Ovary (tissue), 10 donors: ENCODE measurements at regions of chr12 and their contacts with region 1.

Region 1: GRCh38 chr12:107760809-107761501 is at the start of gene PRDM4:
- DNase-seq: peak; percentile 92 to 95 (median 94)
- H3K4me3 ChIP-seq: peak within 1 kb of the TSS; percentile 79
- H3K27ac ChIP-seq: no peak within 1 kb of the TSS
- H3K4me1 ChIP-seq: peaks cover 5% of the 10 kb centered on the region
- H3K27me3 ChIP-seq: no peaks in the 10 kb centered on the region
- CTCF ChIP-seq: peak in 1 of 3 donors; percentile 38
- EP300 ChIP-seq: no peak
- POLR2A ChIP-seq: peak; percentile 67
- total RNA-seq, gene PRDM4: 14.4 to 30.3 (median 26.4) TPM

Region 2: GRCh38 chr12:107685360-107686248 is 75.4 kb before region 1 on chr12 and contains the start of gene PWP1:
- intact Hi-C with region 1: loop called in 1 of 4 experiments (anchors 10 kb)
- DNase-seq: peak; percentile 92 to 96 (median 95)
- H3K4me3 ChIP-seq: peak within 1 kb of the TSS; percentile 93
- H3K27ac ChIP-seq: peak within 1 kb of the TSS; percentile 39 to 72
- H3K4me1 ChIP-seq: peaks cover 4% of the 10 kb centered on the region
- H3K27me3 ChIP-seq: no peaks in the 10 kb centered on the region
- CTCF ChIP-seq: no peak
- EP300 ChIP-seq: no peak
- POLR2A ChIP-seq: peak; percentile 55
- total RNA-seq, gene PWP1: 30.1 to 86.7 (median 34.4) TPM